ENCODE measurements at regions of chr3 and their contacts with region 1.

Region 1: GRCh38 chr3:11059090-11059798 is 66.7 kb downstream of the SLC6A1 start:
- DNase-seq: peak; percentile 44
- ATAC-seq: peak; percentile 92

Region 2: DNA sequence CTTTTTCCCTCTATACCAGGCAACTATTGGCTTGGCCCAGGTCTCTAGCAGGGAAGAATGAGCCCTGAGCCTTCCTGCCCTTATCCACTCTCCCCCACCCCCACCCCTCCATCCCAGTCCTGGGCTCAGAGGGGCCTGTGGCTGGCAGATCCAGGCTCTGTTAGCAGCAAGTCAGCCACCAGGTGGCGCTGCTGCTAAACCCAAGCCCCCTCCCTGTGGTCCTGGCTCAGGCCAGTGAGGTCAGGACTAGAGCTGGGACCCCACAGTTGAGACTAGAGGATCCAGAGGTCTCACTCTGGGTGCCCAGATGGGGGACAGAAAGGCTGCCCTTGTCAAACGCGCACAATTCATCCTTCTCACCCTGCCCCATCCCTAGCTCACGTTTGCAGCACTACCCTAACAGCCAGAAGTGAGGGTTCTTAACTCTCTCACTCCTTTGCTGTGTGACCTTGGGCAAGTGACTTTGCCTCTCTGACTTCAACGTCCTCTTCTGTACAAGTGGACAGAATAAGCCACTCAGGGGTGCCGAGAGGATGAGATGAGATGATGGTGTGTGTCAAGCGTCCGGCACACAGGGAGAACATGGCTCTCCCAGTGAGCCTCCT is 113.5 kb before region 1 on chr3:
- intact Hi-C with region 1: loop called (anchors 5 kb)
- DNase-seq: peak; percentile 84
- ATAC-seq: peak; percentile 87